CD8-positive, alpha-beta T cell (primary cell): ENCODE measurements at regions of chr4 and their contacts with region 1.

Region 1: DNA sequence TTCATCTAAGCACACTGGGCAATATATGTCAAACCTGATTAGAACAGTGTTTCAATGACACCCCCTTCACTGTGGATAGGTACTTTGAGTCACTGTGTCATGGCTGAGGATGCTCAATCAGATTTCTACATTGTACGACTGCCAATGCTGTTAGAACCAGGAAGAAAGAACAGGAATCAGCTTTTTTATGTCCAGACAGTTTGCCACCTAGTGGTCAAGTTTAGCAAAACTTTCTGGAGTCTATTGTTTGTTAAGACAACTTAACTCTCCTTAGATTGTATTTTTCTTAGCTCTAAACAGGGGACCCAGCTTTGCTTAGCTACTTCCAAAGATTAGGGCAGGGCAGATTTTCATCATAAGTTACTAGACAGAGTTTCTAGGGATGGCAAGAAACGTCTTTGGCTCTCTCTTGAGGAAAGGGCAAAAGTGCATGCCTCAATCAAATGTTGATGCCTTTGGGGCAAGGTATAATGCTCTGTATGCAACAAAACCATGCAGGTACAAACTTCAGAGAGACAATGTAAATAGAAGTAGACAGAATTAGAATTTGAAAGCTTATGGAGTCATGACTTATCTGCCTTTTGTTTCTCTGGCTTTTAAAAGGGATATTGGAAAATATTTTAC is 40.5 kb upstream of the BMP3 start:
- DNase-seq: peak in 4 of 9 experiments; percentile 12 to 68 (median 38)
- ATAC-seq: peak; percentile 42
- H3K4me3 ChIP-seq: no peak overlapping the region
- H3K4me3 Mint-ChIP-seq: no peak overlapping the region
- H3K27ac ChIP-seq: no peak overlapping the region
- H3K27ac Mint-ChIP-seq: no peak overlapping the region
- H3K4me1 ChIP-seq: no peaks in the 10 kb centered on the region
- H3K4me1 Mint-ChIP-seq: peaks cover 4% of the 10 kb centered on the region
- H3K27me3 ChIP-seq: no peaks in the 10 kb centered on the region
- H3K27me3 Mint-ChIP-seq: peaks cover 4% of the 10 kb centered on the region
- CTCF ChIP-seq: peak; percentile 83

Region 2: DNA sequence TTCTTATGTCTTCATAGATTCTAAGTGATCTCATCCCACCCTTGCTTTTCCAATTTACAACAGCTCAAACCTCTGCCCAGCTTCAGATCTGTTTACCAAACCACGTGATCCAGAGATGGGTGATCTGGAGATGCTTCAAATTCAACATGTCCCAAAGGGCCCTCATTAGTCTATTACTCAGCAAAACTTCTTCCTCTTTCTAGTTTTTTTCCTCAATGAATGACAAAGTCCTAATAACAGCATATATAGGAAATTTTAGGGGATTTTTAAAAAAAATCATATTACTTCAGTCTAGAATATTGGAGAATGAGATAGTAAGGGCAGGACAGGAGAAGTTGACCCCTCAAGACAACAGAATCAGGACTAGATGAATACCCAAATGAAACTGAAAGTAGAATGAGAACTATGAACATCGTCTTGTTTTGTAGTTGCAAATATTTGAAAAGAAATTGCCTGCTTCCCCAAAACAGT is 527.4 kb before region 1 on chr4:
- CTCF ChIA-PET with region 1: interaction called, 6 read pairs
- POLR2A ChIA-PET with region 1: no interaction called
- intact Hi-C with region 1: loop called (anchors 1 to 2 kb)
- DNase-seq: peak in 2 of 9 experiments; percentile 21 to 36
- ATAC-seq: no peak
- H3K4me3 ChIP-seq: peak overlapping the region; percentile 29
- H3K4me3 Mint-ChIP-seq: peak overlapping the region; percentile 79
- H3K27ac ChIP-seq: peak overlapping the region; percentile 19 to 34
- H3K27ac Mint-ChIP-seq: peak overlapping the region; percentile 78
- H3K4me1 ChIP-seq: peaks cover 22% of the 10 kb centered on the region
- H3K4me1 Mint-ChIP-seq: peaks cover 35% of the 10 kb centered on the region
- H3K27me3 ChIP-seq: no peaks in the 10 kb centered on the region
- H3K27me3 Mint-ChIP-seq: no peaks in the 10 kb centered on the region
- CTCF ChIP-seq: no peak